AG04450 (cell line): ENCODE measurements at regions of chr15 and their contacts with region 1.

Region 1: DNA sequence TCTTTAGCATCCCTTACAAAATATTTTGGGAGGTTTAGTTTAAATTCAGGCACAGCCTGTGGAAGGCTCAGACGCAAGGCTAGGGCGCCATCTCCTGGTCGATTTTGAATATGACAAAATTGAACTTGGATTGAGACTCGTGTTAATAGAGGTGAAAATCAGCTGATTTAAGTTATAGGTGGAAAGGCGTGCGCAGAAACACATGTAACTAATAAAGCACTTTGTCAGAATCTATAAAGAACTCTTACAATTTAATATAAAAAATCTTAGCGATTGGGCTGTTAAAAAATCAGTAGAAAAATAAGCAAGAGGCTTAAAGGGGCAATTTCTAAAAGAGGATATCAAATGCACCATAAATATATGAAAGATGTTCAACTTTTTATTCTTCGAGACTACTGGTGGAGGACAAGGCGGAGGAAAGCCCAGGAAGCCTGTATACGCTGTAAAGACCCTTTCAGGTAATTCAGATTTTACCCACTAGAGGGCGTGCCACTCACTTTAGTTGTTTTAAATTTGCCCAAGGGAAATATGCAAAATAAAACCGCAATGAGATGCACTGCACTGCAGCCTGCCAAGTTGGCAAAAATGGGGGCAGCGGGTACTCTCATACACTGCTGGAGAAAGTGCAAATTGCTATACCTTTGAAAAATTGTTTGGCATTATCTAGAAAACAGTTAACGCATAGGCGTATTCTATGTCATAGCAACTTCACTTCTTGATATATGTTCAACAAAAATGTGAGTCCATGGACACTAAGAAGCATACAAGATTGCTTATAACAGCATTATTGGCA is 64.7 kb downstream of the SLC30A4 start:
- DNase-seq: peak; percentile 63
- H3K4me3 ChIP-seq: peak overlapping the region; percentile 58
- H3K27ac ChIP-seq: no peak overlapping the region
- H3K27me3 ChIP-seq: no peaks in the 10 kb centered on the region
- CTCF ChIP-seq: peak; percentile 68

Region 2: GRCh38 chr15:45166834-45167630 is 290.8 kb before region 1 on chr15:
- CTCF ChIA-PET with region 1: interaction called, 34 read pairs
- POLR2A ChIA-PET with region 1: no interaction called
- DNase-seq: peak; percentile 53
- H3K4me3 ChIP-seq: peak overlapping the region; percentile 58
- H3K27ac ChIP-seq: peak overlapping the region; percentile 83
- H3K27me3 ChIP-seq: no peaks in the 10 kb centered on the region
- CTCF ChIP-seq: peak; percentile 71

Region 3: GRCh38 chr15:45425135-45425534 is 32.7 kb before region 1 on chr15:
- CTCF ChIA-PET with region 1: interaction called, 376 read pairs
- POLR2A ChIA-PET with region 1: no interaction called
- DNase-seq: no peak
- H3K4me3 ChIP-seq: no peak overlapping the region
- H3K27ac ChIP-seq: no peak overlapping the region
- H3K27me3 ChIP-seq: no peaks in the 10 kb centered on the region
- CTCF ChIP-seq: no peak

Region 4: GRCh38 chr15:45442500-45443135 is 15.2 kb before region 1 on chr15:
- CTCF ChIA-PET with region 1: interaction called, 70 read pairs
- POLR2A ChIA-PET with region 1: no interaction called
- DNase-seq: no peak
- H3K4me3 ChIP-seq: no peak overlapping the region
- H3K27ac ChIP-seq: no peak overlapping the region
- H3K27me3 ChIP-seq: no peaks in the 10 kb centered on the region
- CTCF ChIP-seq: no peak

Region 5: GRCh38 chr15:45587095-45587860 is 129.4 kb after region 1 on chr15 and contains the start of gene BLOC1S6:
- CTCF ChIA-PET with region 1: interaction called, 40 read pairs
- POLR2A ChIA-PET with region 1: interaction called, 3 read pairs
- DNase-seq: peak; percentile 74
- H3K4me3 ChIP-seq: peak within 1 kb of the TSS; percentile 88
- H3K27ac ChIP-seq: peak within 1 kb of the TSS; percentile 100
- H3K27me3 ChIP-seq: no peaks in the 10 kb centered on the region
- CTCF ChIP-seq: no peak
- polyA plus RNA-seq, gene BLOC1S6: 29.9 and 39.0 TPM in 2 replicates

Region 6: GRCh38 chr15:45634442-45635190 is 176.8 kb after region 1 on chr15 and contains the start of gene SQOR:
- CTCF ChIA-PET with region 1: interaction called, 12 read pairs
- POLR2A ChIA-PET with region 1: no interaction called
- DNase-seq: no peak
- H3K4me3 ChIP-seq: peak within 1 kb of the TSS; percentile 76
- H3K27ac ChIP-seq: peak within 1 kb of the TSS; percentile 70
- H3K27me3 ChIP-seq: no peaks in the 10 kb centered on the region
- CTCF ChIP-seq: no peak
- polyA plus RNA-seq, gene SQOR: 74.3 and 74.4 TPM in 2 replicates

Region 7: DNA sequence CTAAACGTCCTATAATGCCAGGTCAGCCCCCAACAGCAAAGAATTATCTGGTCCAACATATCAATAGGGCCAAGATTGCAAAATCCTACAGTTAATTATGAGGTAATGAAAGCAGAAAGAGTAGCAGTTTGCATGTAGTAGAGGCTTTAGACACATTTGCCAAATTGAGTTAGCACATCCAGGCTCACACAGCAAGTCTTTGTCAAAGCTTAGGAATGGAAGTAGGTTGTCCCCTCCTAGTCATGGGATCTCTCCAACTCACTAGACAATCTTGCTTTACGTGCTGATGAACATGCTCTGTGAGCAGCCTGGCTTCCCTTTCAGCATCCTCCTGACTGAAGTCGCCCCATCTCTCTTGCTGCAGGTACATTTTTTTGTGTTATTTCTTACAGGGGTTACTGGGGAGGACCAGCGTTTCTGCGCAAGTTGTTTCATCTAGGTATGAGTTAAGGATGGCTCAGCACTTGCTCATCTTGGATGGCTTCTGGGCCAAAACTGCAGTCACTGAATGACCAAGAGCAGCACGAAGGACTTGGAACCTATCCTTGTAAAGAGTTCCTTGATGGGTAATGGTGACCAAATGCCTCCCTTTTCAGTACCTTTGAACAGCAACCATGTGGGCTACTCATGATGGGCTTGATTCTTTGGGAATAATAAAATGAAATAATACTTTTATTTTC is 232.9 kb after region 1 on chr15:
- CTCF ChIA-PET with region 1: no interaction called
- POLR2A ChIA-PET with region 1: no interaction called
- DNase-seq: no peak
- H3K4me3 ChIP-seq: no peak overlapping the region
- H3K27ac ChIP-seq: no peak overlapping the region
- H3K27me3 ChIP-seq: no peaks in the 10 kb centered on the region
- CTCF ChIP-seq: no peak